PC-3 (cell line): ENCODE measurements at regions of chr6 and their contacts with region 1.

Region 1: DNA sequence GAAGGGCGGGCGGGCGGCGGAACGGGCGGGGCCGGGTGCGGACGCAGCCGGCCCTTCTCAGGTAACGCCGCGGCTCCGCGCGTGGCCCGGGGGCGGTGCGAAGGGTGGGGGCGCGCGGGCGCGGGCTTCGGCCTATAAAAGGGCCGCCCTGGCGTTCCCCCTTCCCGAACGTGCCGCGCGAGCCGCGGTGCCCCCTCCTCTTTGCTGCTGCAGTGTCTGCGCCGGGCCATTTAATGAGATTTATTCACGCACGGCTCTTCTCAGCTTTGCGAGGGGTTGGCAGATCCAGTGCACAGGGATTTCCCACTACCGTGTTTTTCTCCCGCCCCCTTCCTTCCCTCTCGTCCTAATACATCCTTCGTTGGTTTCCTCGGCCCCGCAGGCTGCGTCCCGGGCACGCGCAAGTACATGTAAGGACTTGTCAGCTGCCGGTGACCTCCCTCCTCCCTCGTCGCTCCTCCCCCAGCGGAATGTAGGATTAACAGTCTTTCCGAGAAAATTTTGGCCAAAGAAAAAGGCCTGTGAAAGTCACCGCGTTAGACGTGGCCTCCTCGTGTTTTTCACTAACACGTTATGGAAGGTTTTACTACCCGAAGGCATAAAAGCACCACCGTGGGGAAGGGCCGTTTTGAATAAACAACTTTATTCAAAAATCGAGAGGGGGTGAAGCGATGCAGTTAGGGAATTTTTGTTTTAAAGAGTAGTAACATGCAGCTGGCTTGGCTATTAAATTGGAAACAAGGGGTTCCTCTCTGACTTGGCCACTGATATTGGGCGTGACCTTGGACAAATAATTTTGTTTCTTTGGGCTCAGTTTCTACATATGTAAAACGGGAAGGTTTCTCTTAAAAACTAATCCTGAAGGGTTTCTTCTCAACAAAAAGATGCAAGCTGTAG is 966 bp upstream of the REV3L start:
- DNase-seq: peak; percentile 82
- ATAC-seq: peak; percentile 63
- H3K4me3 ChIP-seq: peak overlapping the region; percentile 96
- H3K27ac ChIP-seq: peak overlapping the region; percentile 83
- H3K4me1 ChIP-seq: peaks cover 22% of the 10 kb centered on the region
- H3K27me3 ChIP-seq: no peaks in the 10 kb centered on the region
- CTCF ChIP-seq: no peak

Region 2: DNA sequence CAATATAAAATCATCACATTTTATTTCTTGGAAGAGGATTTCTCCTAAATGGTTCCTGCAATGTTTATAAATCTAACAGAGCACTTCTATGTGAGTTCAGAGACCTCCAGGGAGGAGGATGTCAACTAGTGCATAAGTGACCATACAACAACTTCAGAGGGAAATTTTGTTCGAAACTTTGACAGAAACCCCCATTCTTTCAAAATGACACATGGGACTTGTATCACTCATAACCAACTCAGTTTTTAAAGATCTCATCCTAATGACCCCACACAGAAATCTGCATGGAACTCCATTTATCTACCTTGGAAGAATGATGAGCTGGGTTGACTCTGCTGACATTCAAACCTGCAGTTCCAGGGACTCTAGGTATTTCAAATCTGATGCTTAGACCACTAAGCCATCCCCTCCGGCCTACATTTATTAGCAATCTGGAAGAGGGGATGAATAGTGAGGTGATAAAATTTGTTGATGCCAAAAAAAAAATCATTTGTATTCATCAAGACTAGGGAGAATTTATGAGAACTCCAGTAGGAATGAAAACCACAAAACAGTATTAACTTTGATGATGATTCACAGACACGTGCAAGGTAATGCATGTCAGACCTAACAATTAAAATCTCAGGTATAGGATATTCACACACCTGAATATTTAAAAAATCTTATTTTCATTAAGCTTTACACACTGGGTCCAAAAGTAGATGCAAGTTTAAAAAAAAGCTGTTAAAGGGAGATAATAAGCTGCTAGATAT is 153.9 kb before region 1 on chr6:
- CTCF ChIA-PET with region 1: no interaction called
- POLR2A ChIA-PET with region 1: no interaction called
- intact Hi-C with region 1: no loop called
- DNase-seq: no peak
- ATAC-seq: no peak
- H3K4me3 ChIP-seq: no peak overlapping the region
- H3K27ac ChIP-seq: no peak overlapping the region
- H3K4me1 ChIP-seq: no peaks in the 10 kb centered on the region
- H3K27me3 ChIP-seq: no peaks in the 10 kb centered on the region
- CTCF ChIP-seq: no peak

Region 3: GRCh38 chr6:111382476-111383300 is 101.3 kb before region 1 on chr6:
- CTCF ChIA-PET with region 1: no interaction called
- POLR2A ChIA-PET with region 1: interaction called, 15 read pairs
- intact Hi-C with region 1: loop called (anchors 5 kb)
- DNase-seq: no peak
- ATAC-seq: no peak
- H3K4me3 ChIP-seq: no peak overlapping the region
- H3K27ac ChIP-seq: no peak overlapping the region
- H3K4me1 ChIP-seq: peaks cover 12% of the 10 kb centered on the region
- H3K27me3 ChIP-seq: no peaks in the 10 kb centered on the region
- CTCF ChIP-seq: no peak

Region 4: GRCh38 chr6:111573892-111574797 is 90.2 kb after region 1 on chr6:
- CTCF ChIA-PET with region 1: no interaction called
- POLR2A ChIA-PET with region 1: interaction called, 12 read pairs
- intact Hi-C with region 1: no loop called
- DNase-seq: peak; percentile 32
- ATAC-seq: peak; percentile 20; the same call in 1 of the 2 replicates
- H3K4me3 ChIP-seq: no peak overlapping the region
- H3K27ac ChIP-seq: no peak overlapping the region
- H3K4me1 ChIP-seq: 0 out of 2 replicates have a peak, but pooled peaks cover 4% of the 10 kb centered on the region
- H3K27me3 ChIP-seq: no peaks in the 10 kb centered on the region
- CTCF ChIP-seq: no peak

Region 5: DNA sequence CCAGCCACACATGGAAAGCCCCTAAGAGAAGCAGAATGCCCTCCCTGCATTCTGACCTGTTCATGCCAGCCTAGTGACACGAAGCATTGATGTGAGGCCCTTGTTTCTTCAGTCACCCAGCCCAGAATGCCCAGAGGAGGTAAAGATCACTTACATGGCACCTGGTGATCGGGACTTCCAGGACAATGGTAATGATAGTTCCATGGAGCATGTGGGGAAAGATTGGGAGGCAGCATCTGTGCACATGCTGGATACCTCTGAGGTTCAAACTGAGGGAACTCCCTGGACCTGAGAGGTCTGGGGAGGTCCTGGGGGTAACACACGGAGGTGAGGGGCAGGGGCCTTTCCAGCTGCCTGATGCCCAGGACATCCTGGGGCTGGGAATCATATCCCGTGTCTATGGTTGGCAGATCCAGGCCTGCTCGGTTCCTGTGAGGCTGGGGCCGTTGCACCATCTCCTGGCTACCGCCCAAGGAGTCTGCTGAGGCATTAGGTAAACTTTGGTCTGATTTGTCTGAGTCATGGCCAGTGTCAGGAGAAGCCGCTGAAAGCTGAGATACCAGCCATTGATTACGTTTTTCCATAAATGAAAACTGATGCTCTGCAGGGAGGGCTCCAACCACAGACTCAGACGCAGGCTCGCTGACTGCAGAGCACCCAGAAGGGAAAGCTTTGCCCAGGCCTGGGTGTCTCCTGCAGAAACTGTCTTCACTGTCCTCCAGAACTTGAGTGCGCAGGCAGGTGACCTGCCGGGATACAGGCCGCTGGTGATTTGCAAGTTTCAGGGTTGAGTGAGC is 107.3 kb after region 1 on chr6:
- CTCF ChIA-PET with region 1: no interaction called
- POLR2A ChIA-PET with region 1: no interaction called
- intact Hi-C with region 1: loop called (anchors 1 kb)
- DNase-seq: peak; percentile 98
- ATAC-seq: peak; percentile 75
- H3K4me3 ChIP-seq: peak overlapping the region; percentile 45
- H3K27ac ChIP-seq: peak overlapping the region; percentile 93
- H3K4me1 ChIP-seq: peaks cover 59% of the 10 kb centered on the region
- H3K27me3 ChIP-seq: no peaks in the 10 kb centered on the region
- CTCF ChIP-seq: no peak

Region 6: GRCh38 chr6:111605100-111605751 is 121.2 kb after region 1 on chr6:
- CTCF ChIA-PET with region 1: no interaction called
- POLR2A ChIA-PET with region 1: no interaction called
- intact Hi-C with region 1: loop called (anchors 1 kb)
- DNase-seq: peak; percentile 44
- ATAC-seq: peak; percentile 56
- H3K4me3 ChIP-seq: peak overlapping the region; percentile 89
- H3K27ac ChIP-seq: peak overlapping the region; percentile 91
- H3K4me1 ChIP-seq: peaks cover 37% of the 10 kb centered on the region
- H3K27me3 ChIP-seq: no peaks in the 10 kb centered on the region
- CTCF ChIP-seq: no peak

Region 7: GRCh38 chr6:111657146-111657545 is 173.2 kb after region 1 on chr6:
- CTCF ChIA-PET with region 1: no interaction called
- POLR2A ChIA-PET with region 1: no interaction called
- intact Hi-C with region 1: loop called (anchors 10 kb)
- DNase-seq: peak; percentile 75
- ATAC-seq: peak; percentile 55
- H3K4me3 ChIP-seq: no peak overlapping the region
- H3K27ac ChIP-seq: 0 out of 2 replicates have a peak overlapping the region, but pooled peaks have one; percentile 4
- H3K4me1 ChIP-seq: peaks cover 44% of the 10 kb centered on the region
- H3K27me3 ChIP-seq: no peaks in the 10 kb centered on the region
- CTCF ChIP-seq: no peak

Region 8: DNA sequence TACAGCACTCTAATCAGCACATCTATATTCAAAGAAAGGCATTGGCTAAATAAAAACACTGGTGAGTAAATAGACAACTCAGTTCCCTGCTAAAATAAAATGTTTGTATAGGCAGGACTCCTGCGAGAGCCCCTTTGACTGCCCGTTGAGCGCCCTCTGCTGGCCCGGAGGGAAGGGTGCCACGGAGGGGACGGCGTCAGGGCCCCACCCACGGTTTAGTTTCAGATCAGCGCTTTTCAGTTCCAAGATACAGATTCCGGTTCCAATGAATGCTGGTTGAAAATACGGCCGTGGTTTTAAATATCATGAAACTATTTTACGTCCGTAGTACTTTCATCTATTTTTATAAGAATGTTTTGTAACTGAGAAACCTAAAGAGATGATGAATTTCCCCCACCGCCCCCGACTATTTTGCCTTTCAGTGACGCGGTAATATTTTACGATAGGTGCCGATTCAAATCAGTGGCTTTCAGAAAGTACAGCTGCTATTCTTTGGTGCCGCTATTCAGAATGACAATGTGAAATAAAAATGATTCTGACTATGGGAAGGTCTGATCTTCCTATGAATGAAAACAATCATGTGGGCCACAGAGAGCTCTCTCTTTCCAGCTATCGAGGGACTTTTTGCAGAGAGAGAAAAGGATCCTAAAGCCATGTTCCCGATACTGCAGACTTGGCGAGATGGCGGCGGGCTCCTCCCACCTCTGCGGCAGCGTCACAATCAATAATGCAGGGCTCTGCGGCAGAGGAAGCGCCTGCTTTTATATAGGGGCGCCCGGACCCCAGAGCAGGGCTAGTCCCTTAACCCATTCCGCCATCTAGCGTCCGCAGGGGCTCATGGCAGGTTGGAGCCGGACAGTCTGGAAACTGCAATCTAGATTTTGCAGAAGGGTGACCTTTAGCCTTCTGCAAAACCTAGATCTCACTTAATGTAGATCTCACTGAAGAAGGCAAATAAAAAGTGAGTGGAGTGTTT is 559.3 kb after region 1 on chr6:
- CTCF ChIA-PET with region 1: no interaction called
- POLR2A ChIA-PET with region 1: no interaction called
- intact Hi-C with region 1: loop called (anchors 10 kb)
- DNase-seq: peak; percentile 79
- ATAC-seq: peak; percentile 90
- H3K4me3 ChIP-seq: peak overlapping the region; percentile 72
- H3K27ac ChIP-seq: peak overlapping the region; percentile 66
- H3K4me1 ChIP-seq: peaks cover 25% of the 10 kb centered on the region
- H3K27me3 ChIP-seq: no peaks in the 10 kb centered on the region
- CTCF ChIP-seq: peak; percentile 84